ENCODE measurements at regions of chr1 and their contacts with region 1.

Region 1: GRCh38 chr1:66253330-66253921 is 280.5 kb upstream of the SGIP1 start:
- DNase-seq: no peak

Region 2: DNA sequence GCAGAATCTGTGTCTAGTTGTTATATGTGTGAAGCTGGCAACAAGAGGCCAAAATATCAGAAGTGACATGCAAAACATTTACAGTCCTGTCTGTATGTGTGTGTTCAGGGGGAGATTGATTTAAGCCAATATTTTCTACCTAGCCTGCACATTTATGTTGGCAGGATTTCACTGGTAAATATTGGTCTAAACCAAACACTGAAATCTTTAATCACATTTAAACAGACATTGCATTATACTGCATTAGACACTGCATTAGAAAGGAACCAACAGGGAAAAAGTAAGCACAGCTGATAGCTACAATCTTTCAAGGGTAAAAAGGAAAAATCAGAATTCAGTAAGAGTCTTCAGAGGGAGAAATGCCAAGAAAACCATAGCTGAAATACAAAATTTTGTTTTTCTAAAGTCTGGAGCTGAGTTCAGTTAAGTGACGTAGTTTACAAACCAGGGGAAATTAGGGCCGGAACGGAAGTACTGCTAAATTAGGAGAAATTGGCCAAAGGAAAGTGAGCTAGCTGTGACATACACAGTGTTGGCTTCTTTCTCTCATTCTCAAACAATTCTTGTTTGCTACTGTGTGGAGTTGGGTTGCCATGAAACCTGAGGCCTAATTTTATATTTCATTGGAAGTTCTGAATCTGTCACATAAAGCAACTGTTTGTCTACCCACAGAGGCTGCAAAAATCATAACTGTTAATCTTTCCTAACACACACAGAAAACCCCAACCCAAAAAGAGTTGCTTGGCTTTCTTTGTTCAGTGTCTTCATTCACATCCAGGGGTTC is 63.2 kb after region 1 on chr1:
- intact Hi-C with region 1: no loop called
- DNase-seq: no peak

Region 3: GRCh38 chr1:66383168-66383567 is 129.7 kb after region 1 on chr1:
- intact Hi-C with region 1: no loop called
- DNase-seq: peak in 1 of 10 donors; percentile 16

Region 4: DNA sequence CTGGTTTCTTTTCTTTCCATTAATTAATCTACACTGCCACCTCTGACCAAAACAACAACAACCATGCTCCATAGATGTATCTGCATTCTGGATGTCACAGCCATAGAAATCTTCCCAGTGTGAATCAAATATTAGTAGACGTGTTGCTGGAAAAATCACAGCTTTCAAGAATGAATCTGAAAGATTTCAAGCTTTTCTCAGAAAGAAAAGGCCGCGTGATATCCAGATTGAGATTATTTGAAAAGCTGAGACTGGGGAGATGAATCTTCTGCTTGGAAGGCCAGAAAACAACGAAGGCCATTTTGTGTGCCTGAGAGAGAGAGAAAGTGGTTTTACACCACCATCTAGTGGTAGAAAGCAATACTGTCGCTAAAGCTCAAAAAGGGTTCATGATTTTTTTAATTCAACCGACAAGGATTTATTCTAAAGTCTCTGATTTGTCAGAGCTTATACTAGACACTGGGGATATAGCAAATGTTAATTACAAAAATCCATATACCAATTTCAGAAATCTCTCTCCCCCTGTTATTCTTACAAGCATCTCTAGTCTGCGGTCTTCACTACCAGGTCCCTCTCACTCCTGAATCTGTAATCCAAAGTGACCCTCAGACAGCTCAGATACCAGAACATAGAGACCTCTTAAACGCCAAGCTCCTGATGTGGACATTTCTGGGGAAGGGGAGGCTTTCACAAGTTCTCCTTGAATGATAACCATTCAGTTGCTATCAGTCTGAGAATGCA is 193.0 kb after region 1 on chr1:
- intact Hi-C with region 1: loop called (anchors 1 kb)
- DNase-seq: peak in 1 of 10 donors; percentile 11

Region 5: DNA sequence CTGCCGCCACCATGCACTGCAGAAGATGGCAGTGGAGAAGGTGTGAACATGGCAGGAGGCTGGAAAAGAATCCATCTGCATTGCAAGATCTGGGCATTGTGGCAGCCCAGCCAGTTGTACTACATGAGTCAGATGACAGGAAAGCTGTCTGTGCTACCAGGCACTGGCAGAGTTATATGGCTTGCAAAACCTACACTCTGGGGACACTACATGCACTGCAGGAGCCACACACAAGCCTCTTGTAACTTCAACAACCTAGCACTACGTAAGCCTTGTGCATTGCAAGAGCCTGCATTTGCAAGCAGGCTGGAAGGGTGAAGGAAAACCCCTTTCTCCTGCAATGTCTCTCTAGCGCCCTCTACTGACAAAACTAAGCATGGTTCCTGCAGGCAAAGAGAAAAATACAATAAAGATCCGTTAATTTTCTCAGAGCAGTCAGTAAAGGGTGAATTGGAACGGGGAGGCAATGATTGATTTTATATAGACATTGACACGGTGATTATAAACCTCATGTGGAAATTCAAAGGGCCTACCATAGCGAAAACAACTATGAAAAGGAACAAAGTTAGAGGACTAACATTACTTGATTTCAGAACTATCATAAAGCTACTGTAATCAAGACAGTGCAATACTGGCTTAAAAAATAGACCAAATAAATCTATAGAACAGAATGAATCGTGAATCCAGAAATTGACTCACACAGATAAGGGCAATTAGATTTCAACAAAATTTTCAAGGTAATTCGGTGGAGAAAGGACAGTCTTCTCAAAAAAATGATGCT is 472.6 kb after region 1 on chr1:
- intact Hi-C with region 1: loop called (anchors 10 kb)
- DNase-seq: peak in 5 of 10 donors; percentile 24 to 81 (median 36)

Measured in posterior cingulate gyrus (tissue), 11 donors.